CD8-positive, alpha-beta T cell (primary cell): ENCODE measurements at regions of chr18 and their contacts with region 1.

Region 1: GRCh38 chr18:79378542-79379250 is 17.0 kb upstream of the NFATC1 start:
- DNase-seq: peak; percentile 65 to 89 (median 81)
- ATAC-seq: peak; percentile 98
- H3K4me3 ChIP-seq: no peak overlapping the region
- H3K4me3 Mint-ChIP-seq: no peak overlapping the region
- H3K27ac ChIP-seq: no peak overlapping the region
- H3K27ac Mint-ChIP-seq: peak overlapping the region; percentile 41
- H3K4me1 ChIP-seq: peaks cover 7% of the 10 kb centered on the region
- H3K4me1 Mint-ChIP-seq: peaks cover 7% of the 10 kb centered on the region
- H3K27me3 ChIP-seq: no peaks in the 10 kb centered on the region
- H3K27me3 Mint-ChIP-seq: no peaks in the 10 kb centered on the region
- CTCF ChIP-seq: peak; percentile 94

Region 2: DNA sequence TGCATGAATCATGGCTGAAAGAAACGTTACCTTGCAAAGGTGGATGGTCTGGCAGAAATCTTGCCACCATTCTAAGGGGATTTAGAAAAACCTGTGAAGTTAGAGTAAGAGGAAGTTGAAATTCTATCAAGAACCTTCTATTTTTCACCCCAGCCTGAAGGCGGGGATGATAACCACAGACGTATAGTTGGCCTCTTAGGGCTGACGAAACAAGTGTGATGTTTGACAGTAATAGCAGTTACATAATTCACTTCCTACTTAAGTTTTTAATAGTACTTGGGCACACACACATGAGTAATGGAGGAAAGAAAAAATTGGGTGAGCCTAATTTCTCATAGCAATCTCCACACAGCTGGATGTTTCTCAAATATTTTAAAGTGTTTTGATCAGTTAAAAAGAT is 735.7 kb before region 1 on chr18:
- CTCF ChIA-PET with region 1: no interaction called
- POLR2A ChIA-PET with region 1: no interaction called
- intact Hi-C with region 1: no loop called
- DNase-seq: peak in 3 of 9 experiments; percentile 17 to 76 (median 66)
- ATAC-seq: peak; percentile 67
- H3K4me3 ChIP-seq: no peak overlapping the region
- H3K4me3 Mint-ChIP-seq: no peak overlapping the region
- H3K27ac ChIP-seq: peak overlapping the region in 1 of 2 experiments; percentile 68
- H3K27ac Mint-ChIP-seq: peak overlapping the region; percentile 79
- H3K4me1 ChIP-seq: peaks cover 14% of the 10 kb centered on the region
- H3K4me1 Mint-ChIP-seq: peaks cover 15% of the 10 kb centered on the region
- H3K27me3 ChIP-seq: no peaks in the 10 kb centered on the region
- H3K27me3 Mint-ChIP-seq: no peaks in the 10 kb centered on the region
- CTCF ChIP-seq: no peak

Region 3: GRCh38 chr18:79317718-79318117 is 61.0 kb before region 1 on chr18:
- CTCF ChIA-PET with region 1: no interaction called
- POLR2A ChIA-PET with region 1: no interaction called
- intact Hi-C with region 1: no loop called
- DNase-seq: no peak
- ATAC-seq: no peak
- H3K4me3 ChIP-seq: no peak overlapping the region
- H3K4me3 Mint-ChIP-seq: peak overlapping the region; percentile 23
- H3K27ac ChIP-seq: peak overlapping the region in 1 of 2 experiments; percentile 70
- H3K27ac Mint-ChIP-seq: peak overlapping the region; percentile 75
- H3K4me1 ChIP-seq: peaks cover 12% of the 10 kb centered on the region
- H3K4me1 Mint-ChIP-seq: peaks cover 30% of the 10 kb centered on the region
- H3K27me3 ChIP-seq: no peaks in the 10 kb centered on the region
- H3K27me3 Mint-ChIP-seq: no peaks in the 10 kb centered on the region
- CTCF ChIP-seq: no peak

Region 4: GRCh38 chr18:79366177-79367094 is 12.3 kb before region 1 on chr18:
- CTCF ChIA-PET with region 1: interaction called, 11 read pairs
- POLR2A ChIA-PET with region 1: no interaction called
- intact Hi-C with region 1: no loop called
- DNase-seq: no peak
- ATAC-seq: no peak
- H3K4me3 ChIP-seq: no peak overlapping the region
- H3K4me3 Mint-ChIP-seq: no peak overlapping the region
- H3K27ac ChIP-seq: no peak overlapping the region
- H3K27ac Mint-ChIP-seq: no peak overlapping the region
- H3K4me1 ChIP-seq: peaks cover 16% of the 10 kb centered on the region
- H3K4me1 Mint-ChIP-seq: peaks cover 25% of the 10 kb centered on the region
- H3K27me3 ChIP-seq: no peaks in the 10 kb centered on the region
- H3K27me3 Mint-ChIP-seq: no peaks in the 10 kb centered on the region
- CTCF ChIP-seq: no peak

Region 5: GRCh38 chr18:79400091-79400590 is 21.4 kb after region 1 on chr18:
- CTCF ChIA-PET with region 1: interaction called, 51 read pairs
- POLR2A ChIA-PET with region 1: no interaction called
- intact Hi-C with region 1: no loop called
- DNase-seq: peak; percentile 43 to 80 (median 72)
- ATAC-seq: peak; percentile 33
- H3K4me3 ChIP-seq: peak overlapping the region; percentile 58 to 59
- H3K4me3 Mint-ChIP-seq: peak overlapping the region; percentile 87
- H3K27ac ChIP-seq: peak overlapping the region; percentile 53 to 59
- H3K27ac Mint-ChIP-seq: no peak overlapping the region
- H3K4me1 ChIP-seq: peaks cover 54% of the 10 kb centered on the region
- H3K4me1 Mint-ChIP-seq: peaks cover 47% of the 10 kb centered on the region
- H3K27me3 ChIP-seq: peaks cover 0 to 3% of the 10 kb centered on the region in 2 experiments
- H3K27me3 Mint-ChIP-seq: no peaks in the 10 kb centered on the region
- CTCF ChIP-seq: no peak

Region 6: GRCh38 chr18:79439201-79440023 is 60.7 kb after region 1 on chr18:
- CTCF ChIA-PET with region 1: interaction called, 9 read pairs
- POLR2A ChIA-PET with region 1: no interaction called
- intact Hi-C with region 1: loop called in 1 of 2 experiments (anchors 5 kb)
- DNase-seq: peak in 4 of 9 experiments; percentile 38 to 48 (median 42)
- ATAC-seq: no peak
- H3K4me3 ChIP-seq: no peak overlapping the region
- H3K4me3 Mint-ChIP-seq: no peak overlapping the region
- H3K27ac ChIP-seq: no peak overlapping the region
- H3K27ac Mint-ChIP-seq: peak overlapping the region; percentile 37
- H3K4me1 ChIP-seq: peaks cover 16% of the 10 kb centered on the region
- H3K4me1 Mint-ChIP-seq: peaks cover 43% of the 10 kb centered on the region
- H3K27me3 ChIP-seq: no peaks in the 10 kb centered on the region
- H3K27me3 Mint-ChIP-seq: no peaks in the 10 kb centered on the region
- CTCF ChIP-seq: no peak

Region 7: DNA sequence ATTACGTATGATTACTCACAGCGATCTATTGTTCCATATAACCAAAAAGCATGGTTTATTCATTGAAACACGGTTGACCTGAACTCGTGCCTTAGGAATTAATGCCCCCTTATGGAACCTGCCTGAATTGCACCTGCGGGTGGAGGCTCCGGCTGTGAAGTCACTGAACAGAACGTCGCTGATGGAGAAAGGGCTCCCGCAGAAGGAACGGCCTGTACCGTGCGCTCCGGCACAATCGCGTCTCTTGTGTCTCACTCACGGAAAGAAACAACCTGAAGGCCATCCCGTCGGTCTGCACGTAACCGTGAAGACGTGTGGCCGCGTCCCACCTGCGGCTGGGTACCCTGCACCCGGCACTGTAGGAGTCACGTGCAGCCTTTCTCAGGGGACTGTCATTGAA is 150.2 kb after region 1 on chr18:
- CTCF ChIA-PET with region 1: interaction called, 223 read pairs
- POLR2A ChIA-PET with region 1: no interaction called
- intact Hi-C with region 1: loop called (anchors 1 kb)
- DNase-seq: peak; percentile 58 to 82 (median 76)
- ATAC-seq: peak; percentile 51
- H3K4me3 ChIP-seq: no peak overlapping the region
- H3K4me3 Mint-ChIP-seq: no peak overlapping the region
- H3K27ac ChIP-seq: no peak overlapping the region
- H3K27ac Mint-ChIP-seq: no peak overlapping the region
- H3K4me1 ChIP-seq: peaks cover 18% of the 10 kb centered on the region
- H3K4me1 Mint-ChIP-seq: peaks cover 17% of the 10 kb centered on the region
- H3K27me3 ChIP-seq: no peaks in the 10 kb centered on the region
- H3K27me3 Mint-ChIP-seq: no peaks in the 10 kb centered on the region
- CTCF ChIP-seq: peak; percentile 96

Region 8: GRCh38 chr18:79644006-79644665 is 265.4 kb after region 1 on chr18:
- CTCF ChIA-PET with region 1: interaction called, 109 read pairs
- POLR2A ChIA-PET with region 1: no interaction called
- intact Hi-C with region 1: loop called (anchors 1 kb)
- DNase-seq: peak; percentile 41 to 80 (median 69)
- ATAC-seq: peak; percentile 85
- H3K4me3 ChIP-seq: no peak overlapping the region
- H3K4me3 Mint-ChIP-seq: no peak overlapping the region
- H3K27ac ChIP-seq: no peak overlapping the region
- H3K27ac Mint-ChIP-seq: no peak overlapping the region
- H3K4me1 ChIP-seq: peaks cover 12% of the 10 kb centered on the region
- H3K4me1 Mint-ChIP-seq: peaks cover 11% of the 10 kb centered on the region
- H3K27me3 ChIP-seq: peaks cover 0 to 3% of the 10 kb centered on the region in 2 experiments
- H3K27me3 Mint-ChIP-seq: peaks cover 15% of the 10 kb centered on the region
- CTCF ChIP-seq: peak; percentile 97